ENCODE measurements at regions of chr18 and their contacts with region 1.

Region 1: GRCh38 chr18:76398896-76399612 is 96.0 kb downstream of the ZNF516 start:
- DNase-seq: peak; percentile 81 to 90
- ATAC-seq: peak; percentile 92
- H3K4me3 ChIP-seq: no peak overlapping the region
- H3K27ac ChIP-seq: no peak overlapping the region
- H3K4me1 ChIP-seq: no peaks in the 10 kb centered on the region
- H3K27me3 ChIP-seq: no peaks in the 10 kb centered on the region

Region 2: DNA sequence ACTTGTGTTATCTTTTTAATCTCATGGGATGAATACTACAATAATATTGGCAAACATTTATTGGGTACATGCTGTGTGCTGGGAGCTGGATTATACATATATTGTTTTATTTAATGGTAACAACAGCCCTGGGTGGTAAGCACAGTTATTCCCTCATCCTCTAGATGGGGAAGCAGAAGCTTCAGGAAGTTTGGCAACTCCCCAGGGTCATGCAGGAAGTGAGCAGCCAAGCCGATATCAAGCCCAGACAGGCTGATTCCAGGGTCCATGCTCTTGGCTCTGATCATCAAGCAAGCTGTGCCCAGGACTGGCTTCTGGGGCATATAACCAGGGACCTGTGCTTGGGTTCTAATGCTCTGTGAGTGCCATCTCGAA is 59.8 kb before region 1 on chr18:
- intact Hi-C with region 1: no loop called
- DNase-seq: no peak
- ATAC-seq: no peak
- H3K4me3 ChIP-seq: no peak overlapping the region
- H3K27ac ChIP-seq: no peak overlapping the region
- H3K4me1 ChIP-seq: peaks cover 0 to 1% of the 10 kb centered on the region in 2 donors
- H3K27me3 ChIP-seq: no peaks in the 10 kb centered on the region

Region 3: DNA sequence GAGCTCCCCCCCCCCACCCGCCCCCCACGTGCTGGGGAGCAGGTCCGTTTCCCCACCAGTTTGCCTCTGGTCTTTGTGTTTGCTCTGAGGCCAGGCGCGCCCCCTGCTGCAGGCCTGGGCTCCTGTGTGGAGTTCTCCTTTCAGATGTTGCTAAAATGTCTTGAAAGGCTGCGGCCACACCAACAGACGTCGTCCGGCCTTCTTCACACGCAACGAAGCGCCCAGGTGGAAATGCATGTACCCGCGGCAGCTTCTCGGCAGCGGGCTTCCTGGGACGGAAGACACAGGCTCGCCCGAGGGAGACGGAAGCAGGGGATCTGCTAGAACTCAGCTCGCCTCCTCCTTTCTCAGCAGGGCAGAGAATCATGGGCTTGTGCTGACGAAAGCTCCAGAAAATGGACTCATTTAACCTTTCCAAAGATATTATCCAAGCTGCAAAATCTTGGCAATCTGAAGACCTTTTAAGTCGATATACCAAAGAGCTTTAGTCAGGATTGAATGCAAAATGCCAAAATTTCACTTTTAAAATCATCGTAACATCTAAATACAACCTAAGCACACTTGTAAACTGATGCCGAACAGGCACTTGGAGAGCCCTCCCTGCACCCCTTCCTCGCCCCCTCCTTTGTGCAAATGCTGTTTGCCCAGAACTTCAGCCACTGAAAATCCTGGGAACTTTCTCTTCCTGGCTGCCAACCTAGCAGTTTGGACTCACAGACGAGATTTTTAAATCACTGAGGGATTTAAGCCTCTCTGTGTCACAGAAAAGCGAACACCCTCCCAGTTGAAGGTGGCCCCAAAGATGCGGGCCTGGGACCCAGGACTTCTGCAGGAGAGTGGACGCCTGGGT is 221.5 kb after region 1 on chr18:
- intact Hi-C with region 1: loop called (anchors 5 to 10 kb)
- DNase-seq: peak; percentile 82 to 86
- ATAC-seq: peak; percentile 89
- H3K4me3 ChIP-seq: peak overlapping the region in 1 of 2 donors; percentile 17
- H3K27ac ChIP-seq: no peak overlapping the region
- H3K4me1 ChIP-seq: peaks cover 0 to 3% of the 10 kb centered on the region in 2 donors
- H3K27me3 ChIP-seq: no peaks in the 10 kb centered on the region

Region 4: DNA sequence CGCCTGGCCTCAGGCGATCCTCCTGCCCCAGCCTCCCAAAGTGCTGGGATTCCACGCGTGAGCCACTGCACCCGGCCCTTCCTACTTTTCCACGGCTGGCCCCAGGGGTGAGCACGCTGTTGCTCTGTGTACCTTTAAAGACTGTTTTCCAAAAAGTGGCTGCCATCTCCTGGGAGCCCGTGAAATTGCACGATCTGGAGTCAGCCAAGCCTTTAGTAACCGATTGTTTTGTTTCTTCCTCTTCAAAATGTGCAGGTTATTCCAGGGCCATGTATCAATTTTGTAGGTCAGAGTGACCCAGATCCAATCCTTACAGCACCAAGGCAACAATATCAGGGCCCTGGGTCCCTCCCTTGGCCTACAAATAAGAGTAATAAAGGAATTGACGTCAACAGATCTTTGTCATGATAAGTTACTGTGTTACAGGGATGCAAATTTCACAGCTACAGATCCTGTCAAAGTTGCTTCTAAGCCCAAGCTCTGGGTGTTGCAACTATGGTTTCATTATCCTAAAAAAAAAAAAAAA is 287.7 kb after region 1 on chr18:
- intact Hi-C with region 1: loop called in 1 of 2 experiments (anchors 2 kb)
- DNase-seq: peak; percentile 71 to 85
- ATAC-seq: peak; percentile 86
- H3K4me3 ChIP-seq: no peak overlapping the region
- H3K27ac ChIP-seq: no peak overlapping the region
- H3K4me1 ChIP-seq: no peaks in the 10 kb centered on the region
- H3K27me3 ChIP-seq: no peaks in the 10 kb centered on the region

Region 5: GRCh38 chr18:76709659-76710645 is 310.9 kb after region 1 on chr18:
- intact Hi-C with region 1: loop called (anchors 2 to 5 kb)
- DNase-seq: peak; percentile 76 to 87
- ATAC-seq: peak; percentile 89
- H3K4me3 ChIP-seq: no peak overlapping the region
- H3K27ac ChIP-seq: no peak overlapping the region
- H3K4me1 ChIP-seq: no peaks in the 10 kb centered on the region
- H3K27me3 ChIP-seq: no peaks in the 10 kb centered on the region